GM10248 (cell line): ENCODE measurements at regions of chr21 and their contacts with region 1.

Region 1: DNA sequence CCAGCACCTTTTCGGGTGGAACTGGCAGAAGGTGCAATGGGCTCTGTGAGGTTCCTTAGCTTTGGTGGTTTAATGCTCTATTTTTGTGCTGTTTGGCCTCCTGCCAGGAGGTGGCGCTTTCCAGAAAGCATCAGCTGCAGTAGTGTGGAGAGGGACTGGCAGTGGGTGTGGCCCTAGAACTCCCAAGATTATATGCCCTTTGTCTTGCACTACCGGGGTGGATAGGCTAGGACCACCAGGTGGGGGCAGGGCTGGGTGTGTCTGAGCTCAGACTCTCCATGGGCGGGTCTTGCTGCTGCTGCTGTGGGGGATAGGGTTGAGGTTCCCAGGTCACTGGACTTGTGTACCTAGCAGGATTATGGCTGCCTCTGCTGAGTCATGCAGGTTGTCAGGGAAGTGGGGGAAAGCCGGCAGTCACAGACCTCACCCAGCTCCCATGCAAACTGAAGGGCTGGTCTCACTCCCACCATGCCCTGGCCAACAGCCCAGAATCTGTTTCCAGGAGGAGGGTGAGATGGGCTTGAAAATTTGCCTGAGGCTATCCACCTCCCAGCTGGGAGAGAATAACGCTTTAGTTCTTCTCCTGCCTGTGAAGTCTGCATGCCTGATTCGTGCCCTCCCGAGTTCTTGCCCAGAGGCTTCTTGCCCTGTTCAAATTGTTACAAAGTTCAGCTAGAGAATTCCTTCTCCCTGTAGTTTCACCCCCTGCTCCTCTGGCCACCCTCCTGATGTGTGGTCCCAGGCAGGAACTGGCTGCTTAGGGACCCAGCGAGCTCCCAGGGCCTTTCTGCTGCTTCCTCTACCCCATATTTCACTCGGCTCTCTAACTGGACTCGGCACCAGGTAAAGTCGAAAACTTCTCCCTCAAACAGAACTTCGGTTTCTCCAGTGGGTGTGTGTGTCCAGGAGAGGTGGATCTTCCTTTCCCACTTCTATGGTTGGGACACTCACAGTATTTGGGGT is 76.5 kb upstream of the BTG3 start:
- DNase-seq: no peak
- CTCF ChIP-seq: peak; percentile 13

Region 2: DNA sequence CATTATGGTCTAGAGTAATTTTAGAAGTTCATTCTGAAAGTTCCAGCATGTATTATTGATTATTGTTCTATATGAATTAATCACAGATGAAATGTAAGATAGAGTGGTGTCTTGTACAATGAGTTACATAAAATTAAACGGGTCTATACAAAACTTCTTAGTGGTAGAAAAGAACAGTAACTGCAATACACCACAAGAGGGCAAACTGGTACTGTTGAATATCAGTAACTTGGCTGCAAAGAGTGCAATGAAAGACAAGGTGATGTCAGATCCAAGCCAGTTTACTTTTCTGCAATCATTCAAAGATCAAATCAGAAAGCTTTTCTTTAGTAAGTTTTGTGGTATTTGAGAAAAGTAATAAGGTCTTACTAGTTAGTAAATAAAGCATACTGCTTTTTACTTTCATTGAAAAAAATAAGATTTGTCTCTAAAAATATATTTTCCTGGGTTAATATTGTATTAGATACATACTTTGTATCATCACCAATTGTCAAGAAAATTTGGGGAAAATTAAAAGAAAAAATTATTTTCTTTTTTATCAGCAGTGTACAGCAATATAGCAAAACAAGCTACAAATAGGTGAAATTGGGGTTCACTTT is 10.1 kb before region 1 on chr21:
- CTCF ChIA-PET with region 1: interaction called, 10 read pairs
- POLR2A ChIA-PET with region 1: no interaction called
- DNase-seq: peak; percentile 69
- CTCF ChIP-seq: peak; percentile 70

Region 3: DNA sequence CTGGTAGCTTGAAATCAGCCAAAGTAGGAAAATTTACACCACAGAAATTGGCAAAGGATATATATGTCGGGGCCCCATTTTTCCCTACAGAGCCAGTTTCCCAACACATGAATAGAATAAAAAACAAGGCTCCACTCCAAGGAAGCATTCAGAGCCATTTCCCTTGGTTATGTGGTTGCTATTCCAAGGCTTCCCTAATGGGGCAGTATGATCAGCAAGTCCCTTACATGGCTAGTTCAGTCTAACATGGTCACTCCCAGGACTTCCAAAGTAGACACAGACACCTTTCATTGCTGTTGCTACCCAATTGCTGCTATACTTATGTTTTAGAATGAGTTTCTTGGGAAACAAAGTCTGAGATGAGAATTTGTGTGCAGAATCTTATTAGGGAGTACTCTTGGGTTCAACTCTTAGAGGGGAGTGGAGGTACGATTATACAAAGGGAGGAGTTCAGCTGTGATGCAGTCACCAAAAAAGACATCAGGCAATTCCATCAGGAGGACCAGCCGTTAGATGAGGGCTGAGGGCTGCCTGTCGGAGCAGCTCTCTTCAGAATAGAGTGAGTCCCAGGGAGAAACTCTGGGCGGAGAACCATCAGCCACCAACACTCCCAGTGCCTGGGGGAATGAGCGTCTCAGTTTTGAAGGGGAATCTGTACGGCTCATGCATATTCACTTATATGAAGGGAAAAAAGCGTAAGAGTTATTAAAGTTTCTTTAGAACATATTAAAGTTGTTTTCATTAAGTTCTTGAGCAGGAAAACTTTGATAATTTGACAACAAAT is 37.0 kb after region 1 on chr21:
- CTCF ChIA-PET with region 1: no interaction called
- POLR2A ChIA-PET with region 1: no interaction called
- DNase-seq: no peak
- CTCF ChIP-seq: no peak